Prostate gland (tissue), 2 donors: ENCODE measurements at regions of chr11 and their contacts with region 1.

Region 1: DNA sequence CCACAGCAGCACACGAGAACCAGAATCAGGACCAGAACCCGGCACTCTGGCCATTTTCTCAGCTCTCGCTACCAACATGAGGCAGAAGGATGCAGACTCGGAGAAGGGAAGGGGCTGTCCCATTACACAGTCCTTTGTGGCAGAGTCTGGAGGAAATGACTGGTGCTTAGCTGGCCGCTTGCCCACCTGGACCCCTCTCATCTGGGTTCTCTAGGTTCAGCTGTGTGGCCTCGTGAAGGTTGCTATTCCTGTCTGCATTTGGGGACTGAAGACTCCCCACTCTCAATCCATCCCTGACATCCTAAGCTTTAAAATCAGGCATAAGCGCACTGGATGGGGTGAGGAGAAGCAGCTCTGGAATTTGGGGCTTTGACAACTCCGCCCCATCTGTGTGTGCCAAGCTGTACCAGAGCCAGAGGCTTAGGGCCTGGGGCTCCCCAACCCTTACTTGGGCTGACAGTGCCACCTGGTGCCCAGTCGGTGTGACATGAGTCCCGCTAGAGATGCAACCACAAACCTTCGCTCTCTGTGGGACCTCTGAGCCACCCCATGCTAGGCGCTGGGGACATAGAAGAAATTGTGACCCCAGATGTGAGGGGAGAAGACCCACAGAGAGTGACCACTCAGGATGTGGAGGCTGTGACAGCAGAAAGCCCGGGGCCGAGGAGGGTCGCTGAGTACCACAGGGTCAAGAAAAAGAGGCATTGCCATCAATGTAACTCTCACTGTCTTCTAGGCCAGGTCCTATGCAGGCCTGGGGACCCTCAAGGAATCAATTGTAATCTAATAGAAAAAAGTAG is 35.9 kb upstream of the FCHSD2 start:
- DNase-seq: peak; percentile 81
- H3K4me3 ChIP-seq: no peak overlapping the region
- H3K27ac ChIP-seq: peak overlapping the region in 1 of 2 donors; percentile 2
- H3K4me1 ChIP-seq: no peaks in the 10 kb centered on the region
- H3K27me3 ChIP-seq: no peaks in the 10 kb centered on the region
- CTCF ChIP-seq: peak; percentile 61 to 92 (median 87)
- POLR2A ChIP-seq: no peak

Region 2: GRCh38 chr11:72722050-72722748 is 455.8 kb before region 1 on chr11:
- intact Hi-C with region 1: loop called (anchors 2 kb)
- DNase-seq: peak; percentile 88
- H3K4me3 ChIP-seq: peak overlapping the region; percentile 49 to 59
- H3K27ac ChIP-seq: peak overlapping the region; percentile 82 to 89
- H3K4me1 ChIP-seq: peaks cover 10% of the 10 kb centered on the region
- H3K27me3 ChIP-seq: no peaks in the 10 kb centered on the region
- CTCF ChIP-seq: peak in 3 of 4 experiments; percentile 10 to 48 (median 11)
- POLR2A ChIP-seq: peak; percentile 70

Region 3: GRCh38 chr11:72831513-72832300 is 346.3 kb before region 1 on chr11:
- intact Hi-C with region 1: loop called (anchors 1 kb)
- DNase-seq: peak; percentile 77
- H3K4me3 ChIP-seq: no peak overlapping the region
- H3K27ac ChIP-seq: peak overlapping the region in 1 of 2 donors; percentile 37
- H3K4me1 ChIP-seq: peaks cover 5% of the 10 kb centered on the region
- H3K27me3 ChIP-seq: no peaks in the 10 kb centered on the region
- CTCF ChIP-seq: peak; percentile 86 to 97 (median 91)
- POLR2A ChIP-seq: no peak

Region 4: GRCh38 chr11:72924568-72925190 is 253.3 kb before region 1 on chr11:
- intact Hi-C with region 1: loop called (anchors 5 kb)
- DNase-seq: no peak
- H3K4me3 ChIP-seq: no peak overlapping the region
- H3K27ac ChIP-seq: no peak overlapping the region
- H3K4me1 ChIP-seq: no peaks in the 10 kb centered on the region
- H3K27me3 ChIP-seq: no peaks in the 10 kb centered on the region
- CTCF ChIP-seq: peak in 2 of 4 experiments; percentile 56 to 58
- POLR2A ChIP-seq: no peak

Region 5: DNA sequence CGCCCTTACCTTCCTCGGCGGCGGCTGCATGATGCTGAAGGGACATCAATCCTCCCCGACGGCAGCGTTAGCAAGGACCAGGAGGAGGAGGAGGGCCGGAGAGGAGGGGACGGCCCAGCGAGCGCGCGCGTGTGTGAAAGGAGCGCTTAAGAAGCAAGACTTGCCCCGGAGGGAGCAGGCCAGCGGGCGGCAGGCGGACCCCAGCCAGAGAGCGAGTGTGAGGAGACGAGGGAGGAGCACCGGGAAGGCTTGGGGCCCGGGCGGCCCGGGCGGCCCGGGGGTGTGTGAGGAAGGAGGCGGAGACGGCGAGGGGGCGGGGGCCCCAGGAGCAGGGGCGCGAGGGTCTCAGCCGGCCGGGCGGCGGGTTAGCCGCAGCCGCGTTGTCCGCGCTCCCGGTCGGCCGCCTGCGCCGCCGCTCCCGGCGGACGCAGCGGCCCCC is 36.1 kb before region 1 on chr11:
- intact Hi-C with region 1: loop called (anchors 2 kb)
- DNase-seq: peak; percentile 36
- H3K4me3 ChIP-seq: peak overlapping the region; percentile 93 to 94
- H3K27ac ChIP-seq: peak overlapping the region; percentile 95 to 96
- H3K4me1 ChIP-seq: peaks cover 4% of the 10 kb centered on the region
- H3K27me3 ChIP-seq: no peaks in the 10 kb centered on the region
- CTCF ChIP-seq: no peak
- POLR2A ChIP-seq: no peak